CD4-positive, alpha-beta T cell (primary cell): ENCODE measurements at regions of chr9 and their contacts with region 1.

Region 1: DNA sequence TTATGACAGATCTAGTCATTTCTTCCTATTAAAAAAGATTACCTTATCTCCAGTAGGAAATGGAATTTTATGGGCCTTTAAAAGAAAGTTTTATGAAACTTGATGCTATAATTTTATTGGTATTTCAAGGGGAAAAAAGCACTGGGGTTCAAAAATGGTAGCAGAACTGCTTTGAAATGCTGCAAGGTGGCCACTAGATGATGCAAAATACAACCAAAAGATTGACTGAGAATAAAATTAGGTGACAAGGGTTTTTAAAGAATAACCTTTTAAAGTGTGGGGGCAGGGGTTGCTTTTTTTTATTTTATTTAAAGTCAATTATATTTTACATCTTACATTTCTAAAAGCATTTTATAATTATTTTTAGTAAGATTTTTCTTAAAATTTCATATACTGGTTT is 61.7 kb downstream of the KLF9 start:
- DNase-seq: peak in 3 of 14 experiments; percentile 43 to 52 (median 51)
- ATAC-seq: no peak
- H3K4me3 ChIP-seq: no peak overlapping the region
- H3K4me3 Mint-ChIP-seq: no peak overlapping the region
- H3K27ac ChIP-seq: no peak overlapping the region
- H3K27ac Mint-ChIP-seq: no peak overlapping the region
- H3K4me1 ChIP-seq: no peaks in the 10 kb centered on the region
- H3K4me1 Mint-ChIP-seq: no peaks in the 10 kb centered on the region
- H3K27me3 ChIP-seq: no peaks in the 10 kb centered on the region
- H3K27me3 Mint-ChIP-seq: no peaks in the 10 kb centered on the region
- CTCF ChIP-seq: peak; percentile 80

Region 2: DNA sequence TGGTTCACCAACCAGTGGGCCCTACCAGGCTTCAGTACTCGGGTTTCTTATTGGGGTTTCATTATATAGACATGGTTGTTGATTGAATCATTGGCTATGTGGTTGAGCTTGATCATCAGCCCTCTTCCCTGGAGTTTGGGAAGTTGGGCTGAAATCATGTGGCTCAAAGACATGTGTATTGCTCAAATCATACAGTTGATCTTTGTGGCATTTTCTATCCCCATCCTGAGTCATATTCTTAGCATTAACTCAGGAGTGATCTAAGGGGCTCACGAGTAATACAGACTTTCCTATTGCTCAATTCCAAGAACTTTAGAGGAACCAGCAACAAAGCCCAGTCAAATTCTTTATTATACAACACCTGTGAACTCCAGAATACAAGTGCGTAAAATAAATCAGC is 27.8 kb before region 1 on chr9:
- CTCF ChIA-PET with region 1: no interaction called
- POLR2A ChIA-PET with region 1: no interaction called
- intact Hi-C with region 1: no loop called
- DNase-seq: no peak
- ATAC-seq: no peak
- H3K4me3 ChIP-seq: no peak overlapping the region
- H3K4me3 Mint-ChIP-seq: no peak overlapping the region
- H3K27ac ChIP-seq: no peak overlapping the region
- H3K27ac Mint-ChIP-seq: no peak overlapping the region
- H3K4me1 ChIP-seq: no peaks in the 10 kb centered on the region
- H3K4me1 Mint-ChIP-seq: no peaks in the 10 kb centered on the region
- H3K27me3 ChIP-seq: no peaks in the 10 kb centered on the region
- H3K27me3 Mint-ChIP-seq: no peaks in the 10 kb centered on the region
- CTCF ChIP-seq: no peak

Region 3: GRCh38 chr9:70406434-70406862 is 53.6 kb after region 1 on chr9:
- CTCF ChIA-PET with region 1: no interaction called
- POLR2A ChIA-PET with region 1: no interaction called
- intact Hi-C with region 1: loop called (anchors 5 to 10 kb)
- DNase-seq: peak in 3 of 14 experiments; percentile 50 to 58 (median 56)
- ATAC-seq: no peak
- H3K4me3 ChIP-seq: peak overlapping the region; percentile 8
- H3K4me3 Mint-ChIP-seq: peak overlapping the region; percentile 73
- H3K27ac ChIP-seq: no peak overlapping the region
- H3K27ac Mint-ChIP-seq: peak overlapping the region; percentile 71
- H3K4me1 ChIP-seq: peaks cover 73% of the 10 kb centered on the region
- H3K4me1 Mint-ChIP-seq: peaks cover 88% of the 10 kb centered on the region
- H3K27me3 ChIP-seq: no peaks in the 10 kb centered on the region
- H3K27me3 Mint-ChIP-seq: no peaks in the 10 kb centered on the region
- CTCF ChIP-seq: no peak